ENCODE measurements at regions of chr12 and their contacts with region 1.

Region 1: GRCh38 chr12:48977315-48978281 is 524 bp upstream of the WNT1 start:
- DNase-seq: peak; percentile 89
- ATAC-seq: peak; percentile 32
- H3K4me3 Mint-ChIP-seq: peak overlapping the region; percentile 42
- H3K27ac Mint-ChIP-seq: no peak overlapping the region
- H3K4me1 Mint-ChIP-seq: peaks cover 45% of the 10 kb centered on the region
- H3K27me3 Mint-ChIP-seq: peaks cover 78% of the 10 kb centered on the region

Region 2: GRCh38 chr12:48873096-48873495 is 104.5 kb before region 1 on chr12:
- POLR2A ChIA-PET with region 1: no interaction called
- DNase-seq: no peak
- ATAC-seq: no peak
- H3K4me3 Mint-ChIP-seq: no peak overlapping the region
- H3K27ac Mint-ChIP-seq: no peak overlapping the region
- H3K4me1 Mint-ChIP-seq: no peaks in the 10 kb centered on the region
- H3K27me3 Mint-ChIP-seq: peaks cover under 1% of the 10 kb centered on the region

Region 3: GRCh38 chr12:48924617-48925303 is 52.8 kb before region 1 on chr12:
- POLR2A ChIA-PET with region 1: interaction called, 12 read pairs
- DNase-seq: peak; percentile 78
- ATAC-seq: peak; percentile 80
- H3K4me3 Mint-ChIP-seq: peak overlapping the region; percentile 92
- H3K27ac Mint-ChIP-seq: peak overlapping the region; percentile 90
- H3K4me1 Mint-ChIP-seq: peaks cover 21% of the 10 kb centered on the region
- H3K27me3 Mint-ChIP-seq: no peaks in the 10 kb centered on the region

Region 4: GRCh38 chr12:48957141-48958048 is 20.2 kb before region 1 on chr12 and contains the start of gene ARF3:
- POLR2A ChIA-PET with region 1: interaction called, 15 read pairs
- DNase-seq: peak; percentile 94
- ATAC-seq: peak; percentile 94
- H3K4me3 Mint-ChIP-seq: peak within 1 kb of the TSS; percentile 98
- H3K27ac Mint-ChIP-seq: peak within 1 kb of the TSS; percentile 93
- H3K4me1 Mint-ChIP-seq: peaks cover 31% of the 10 kb centered on the region
- H3K27me3 Mint-ChIP-seq: peaks cover 8% of the 10 kb centered on the region
- total RNA-seq, gene ARF3: 88.0 to 96.5 TPM

Region 5: GRCh38 chr12:49088190-49088931 is 110.8 kb after region 1 on chr12:
- POLR2A ChIA-PET with region 1: no interaction called
- DNase-seq: peak; percentile 69
- ATAC-seq: peak; percentile 86
- H3K4me3 Mint-ChIP-seq: peak overlapping the region; percentile 46
- H3K27ac Mint-ChIP-seq: no peak overlapping the region
- H3K4me1 Mint-ChIP-seq: peaks cover 49% of the 10 kb centered on the region
- H3K27me3 Mint-ChIP-seq: peaks cover 44% of the 10 kb centered on the region

Region 6: DNA sequence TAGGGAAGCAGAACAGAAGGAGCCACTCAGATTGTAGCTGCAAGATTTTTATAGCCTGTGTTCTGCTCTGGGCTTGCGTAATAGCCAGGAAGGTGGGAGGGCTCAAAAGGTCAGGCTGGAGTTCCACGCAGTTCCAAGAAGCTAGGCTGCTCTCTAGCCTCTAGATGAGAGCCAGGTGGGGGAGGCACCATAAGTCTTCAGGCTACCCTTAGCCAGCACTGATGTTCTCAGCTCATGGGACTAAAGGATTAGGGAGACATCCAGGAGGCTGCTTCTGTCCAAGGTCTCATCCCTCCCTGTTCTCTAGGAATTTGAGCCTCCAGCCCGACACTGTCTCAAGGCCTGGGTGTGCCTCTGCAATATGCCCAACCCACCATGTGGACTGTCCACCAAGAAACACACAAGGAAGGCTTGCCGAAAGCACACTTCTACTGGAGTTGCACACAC is 131.4 kb after region 1 on chr12:
- POLR2A ChIA-PET with region 1: no interaction called
- DNase-seq: no peak
- ATAC-seq: no peak
- H3K4me3 Mint-ChIP-seq: peak overlapping the region; percentile 96
- H3K27ac Mint-ChIP-seq: peak overlapping the region; percentile 51
- H3K4me1 Mint-ChIP-seq: peaks cover 29% of the 10 kb centered on the region
- H3K27me3 Mint-ChIP-seq: no peaks in the 10 kb centered on the region